Natural killer cell (primary cell): ENCODE measurements at regions of chr1 and their contacts with region 1.

Region 1: GRCh38 chr1:111030590-111030989 is 66.9 kb upstream of the LRIF1 start:
- DNase-seq: peak in 1 of 2 donors; percentile 80
- ATAC-seq: peak; percentile 47 to 67 (median 64)
- H3K4me3 ChIP-seq: no peak overlapping the region
- H3K4me3 Mint-ChIP-seq: no peak overlapping the region
- H3K27ac ChIP-seq: no peak overlapping the region
- H3K27ac Mint-ChIP-seq: no peak overlapping the region
- H3K4me1 ChIP-seq: no peaks in the 10 kb centered on the region
- H3K4me1 Mint-ChIP-seq: no peaks in the 10 kb centered on the region
- H3K27me3 ChIP-seq: no peaks in the 10 kb centered on the region
- H3K27me3 Mint-ChIP-seq: peaks cover 27 to 37% of the 10 kb centered on the region in 2 donors
- CTCF ChIP-seq: peak; percentile 81

Region 2: DNA sequence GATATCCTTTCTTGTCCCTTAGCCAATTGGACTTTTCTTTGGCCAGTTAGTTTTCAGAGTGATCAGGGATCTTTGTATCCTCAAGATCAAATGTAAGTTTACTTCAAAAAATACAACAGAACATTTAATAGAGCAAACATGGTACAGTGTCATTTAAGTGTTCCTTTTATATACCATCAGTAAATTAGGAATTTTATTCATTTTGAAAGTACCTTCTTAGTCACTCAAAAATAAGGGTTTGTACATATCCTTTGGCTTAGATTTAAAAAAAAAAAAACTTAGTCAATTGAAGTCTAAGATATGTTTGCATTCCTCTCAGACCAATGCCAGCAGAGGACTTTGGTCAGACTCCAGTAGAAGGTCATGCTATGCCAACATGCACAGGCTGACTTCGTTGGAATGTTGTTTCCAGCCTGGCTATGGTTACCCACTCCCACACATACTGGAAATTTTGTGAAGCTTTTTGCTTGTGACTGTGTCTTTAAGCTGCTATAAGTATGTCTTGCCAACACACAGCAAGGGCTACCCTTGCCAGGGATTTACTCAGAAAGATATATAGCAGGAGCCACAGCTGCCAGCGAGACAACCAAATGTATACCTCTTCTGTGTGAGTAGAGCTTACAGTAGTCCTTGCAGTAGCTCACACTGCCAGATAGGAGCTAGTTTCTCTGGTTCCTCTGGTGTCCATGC is 14.6 kb after region 1 on chr1:
- intact Hi-C with region 1: no loop called
- DNase-seq: no peak
- ATAC-seq: no peak
- H3K4me3 ChIP-seq: no peak overlapping the region
- H3K4me3 Mint-ChIP-seq: no peak overlapping the region
- H3K27ac ChIP-seq: no peak overlapping the region
- H3K27ac Mint-ChIP-seq: no peak overlapping the region
- H3K4me1 ChIP-seq: no peaks in the 10 kb centered on the region
- H3K4me1 Mint-ChIP-seq: peaks cover 0 to under 1% of the 10 kb centered on the region in 2 donors
- H3K27me3 ChIP-seq: peaks cover 12% of the 10 kb centered on the region
- H3K27me3 Mint-ChIP-seq: peaks cover 46 to 50% of the 10 kb centered on the region in 2 donors
- CTCF ChIP-seq: no peak

Region 3: GRCh38 chr1:111334169-111334568 is 303.6 kb after region 1 on chr1:
- intact Hi-C with region 1: loop called (anchors 1 kb)
- DNase-seq: peak in 1 of 2 donors; percentile 85
- ATAC-seq: peak in 2 of 3 donors; percentile 82 to 86
- H3K4me3 ChIP-seq: no peak overlapping the region
- H3K4me3 Mint-ChIP-seq: no peak overlapping the region
- H3K27ac ChIP-seq: no peak overlapping the region
- H3K27ac Mint-ChIP-seq: no peak overlapping the region
- H3K4me1 ChIP-seq: no peaks in the 10 kb centered on the region
- H3K4me1 Mint-ChIP-seq: peaks cover 0 to 5% of the 10 kb centered on the region in 2 donors
- H3K27me3 ChIP-seq: no peaks in the 10 kb centered on the region
- H3K27me3 Mint-ChIP-seq: peaks cover 0 to 11% of the 10 kb centered on the region in 2 donors
- CTCF ChIP-seq: peak; percentile 74

Region 4: DNA sequence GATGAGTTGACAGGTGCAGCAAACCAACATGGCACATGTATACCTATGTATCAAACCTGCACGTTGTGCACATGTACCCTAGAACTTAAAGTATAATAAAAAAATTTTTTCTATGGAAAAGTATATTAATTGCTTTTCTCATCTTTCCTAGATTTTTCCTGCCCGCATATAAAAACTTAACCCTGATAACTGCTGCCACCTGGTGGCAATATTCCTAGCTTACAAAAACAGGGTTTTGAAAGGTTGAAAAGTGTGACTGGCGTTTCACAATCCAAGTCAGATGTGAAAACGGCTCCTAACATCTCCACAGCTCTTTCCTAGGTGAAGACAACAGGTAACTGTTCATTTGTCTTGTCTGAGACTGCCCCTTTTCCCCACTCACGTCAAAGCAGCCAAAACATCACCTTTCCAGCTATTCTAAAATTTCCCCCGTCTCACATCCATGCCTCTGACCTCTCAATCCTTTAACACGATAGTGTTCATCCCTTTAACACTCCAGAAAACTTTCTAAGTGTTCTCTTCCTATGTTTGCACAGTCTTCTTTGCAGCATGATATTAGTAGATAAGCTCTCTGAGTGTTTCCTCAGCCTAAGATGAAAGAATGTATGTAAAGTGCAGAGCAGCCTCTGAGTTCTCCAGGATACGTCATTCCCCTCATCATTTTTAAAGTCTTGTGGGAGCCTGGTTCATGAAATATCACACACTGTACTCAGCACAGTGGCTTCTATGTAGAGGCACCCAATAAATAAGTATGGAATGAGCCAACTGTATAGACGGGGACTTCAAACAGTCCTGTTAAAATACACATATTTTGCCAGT is 369.4 kb after region 1 on chr1:
- intact Hi-C with region 1: loop called (anchors 10 kb)
- DNase-seq: peak; percentile 21 to 73
- ATAC-seq: peak in 1 of 3 donors; percentile 31
- H3K4me3 ChIP-seq: no peak overlapping the region
- H3K4me3 Mint-ChIP-seq: no peak overlapping the region
- H3K27ac ChIP-seq: no peak overlapping the region
- H3K27ac Mint-ChIP-seq: no peak overlapping the region
- H3K4me1 ChIP-seq: no peaks in the 10 kb centered on the region
- H3K4me1 Mint-ChIP-seq: peaks cover 6 to 7% of the 10 kb centered on the region in 2 donors
- H3K27me3 ChIP-seq: no peaks in the 10 kb centered on the region
- H3K27me3 Mint-ChIP-seq: peaks cover 18 to 20% of the 10 kb centered on the region in 2 donors
- CTCF ChIP-seq: peak; percentile 73